Activated T-helper 1 cell treated with anti-CD3 and anti-CD28 coated beads, Interleukin-12 subunit alpha, Interleukin-12 subunit beta, Interleukin-2, Interleukin-4 antibody, amounts not matched to agents 30 ng/mL and 10 ng/mL and 1 ng/mL, durations not matched to agents 14 hours and 24 hours and 36 hours (primary cell): ENCODE measurements at regions of chr17 and their contacts with region 1.

Region 1: DNA sequence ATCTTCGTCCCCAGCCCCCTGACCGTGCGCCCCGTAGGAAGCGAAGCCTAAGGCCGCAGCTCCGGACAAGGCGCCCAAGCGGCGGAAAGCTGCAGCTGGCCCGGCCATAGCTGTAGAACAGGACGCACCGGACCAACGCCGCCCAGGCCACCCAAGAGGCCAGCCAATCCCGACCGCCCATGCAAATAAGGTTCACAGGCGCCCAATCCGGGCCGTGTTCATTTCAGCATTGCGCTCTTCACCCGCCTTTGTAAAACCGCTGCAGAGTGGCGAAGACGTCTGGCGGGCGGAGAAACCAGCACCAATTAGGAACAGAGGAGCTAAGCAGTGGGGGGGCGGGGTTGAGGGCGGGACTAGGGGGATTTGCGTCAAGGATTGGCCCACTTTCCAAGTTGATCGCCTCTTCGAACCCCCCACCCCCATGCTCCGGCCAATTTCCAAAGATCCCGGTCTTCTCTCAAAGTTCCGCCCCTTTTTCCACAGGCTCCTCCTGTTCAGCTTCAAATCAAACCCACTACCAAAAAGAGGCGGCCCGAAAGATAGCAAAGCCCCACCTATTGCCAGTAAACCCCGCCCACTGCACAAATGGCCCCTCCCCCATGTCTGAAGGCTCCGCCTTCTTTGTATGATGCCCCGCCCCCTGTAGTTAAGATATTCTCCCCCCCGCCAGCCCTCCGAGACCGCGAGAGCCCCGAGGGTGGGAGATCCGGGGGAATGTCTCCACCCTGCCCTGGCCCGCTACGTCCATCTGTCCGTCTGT is at the start of gene TMEM256:
- DNase-seq: peak; percentile 94
- H3K4me3 Mint-ChIP-seq: peak within 1 kb of the TSS; percentile 92
- H3K27ac Mint-ChIP-seq: peak within 1 kb of the TSS; percentile 95
- H3K4me1 Mint-ChIP-seq: peaks cover 13% of the 10 kb centered on the region
- H3K27me3 Mint-ChIP-seq: peaks cover 21% of the 10 kb centered on the region
- total RNA-seq, gene TMEM256: 53.5 and 54.7 TPM in 2 replicates

Region 2: GRCh38 chr17:7214300-7215135 is 189.6 kb before region 1 on chr17:
- intact Hi-C with region 1: loop called (anchors 1 kb)
- DNase-seq: peak; percentile 99
- H3K4me3 Mint-ChIP-seq: peak overlapping the region; percentile 91
- H3K27ac Mint-ChIP-seq: peak overlapping the region; percentile 98
- H3K4me1 Mint-ChIP-seq: peaks cover 55% of the 10 kb centered on the region
- H3K27me3 Mint-ChIP-seq: peaks cover 14% of the 10 kb centered on the region

Region 3: DNA sequence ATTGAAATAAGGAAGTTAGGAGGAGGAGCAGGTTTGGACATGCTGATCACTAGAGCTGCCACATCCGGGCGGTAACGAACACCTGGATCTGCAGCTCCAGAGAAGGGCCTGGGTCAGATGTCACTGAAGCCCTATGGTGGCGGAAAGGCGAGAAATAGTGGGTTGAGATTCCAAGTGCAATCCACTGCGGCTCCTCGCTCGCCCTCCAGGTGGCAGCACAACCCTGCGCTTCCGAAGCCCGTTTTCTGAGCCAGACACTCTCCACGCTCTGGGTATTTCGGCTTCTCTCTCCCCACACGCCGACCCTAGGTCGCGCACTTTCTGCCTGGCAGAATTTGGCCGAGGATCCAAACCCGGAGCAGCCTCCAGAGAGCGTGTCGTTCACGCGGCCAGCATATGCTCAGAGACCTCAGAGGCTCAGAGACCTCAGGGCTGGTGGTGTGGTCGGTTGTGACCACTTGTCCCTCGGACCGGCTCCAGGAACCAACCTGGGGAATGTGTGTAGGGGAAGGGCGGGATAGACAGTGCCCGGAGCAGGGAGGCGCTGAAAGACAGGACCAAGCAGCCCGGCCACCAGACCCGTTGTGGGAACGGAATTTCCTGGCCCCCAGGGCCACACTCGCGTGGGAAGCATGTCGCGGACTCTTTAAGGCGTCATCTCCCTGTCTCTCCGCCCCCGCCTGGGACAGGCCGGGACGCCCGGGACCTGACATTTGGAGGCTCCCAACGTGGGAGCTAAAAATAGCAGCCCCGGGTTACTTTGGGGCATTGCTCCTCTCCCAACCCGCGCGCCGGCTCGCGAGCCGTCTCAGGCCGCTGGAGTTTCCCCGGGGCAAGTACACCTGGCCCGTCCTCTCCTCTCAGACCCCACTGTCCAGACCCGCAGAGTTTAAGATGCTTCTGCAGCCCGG is 123.4 kb before region 1 on chr17:
- intact Hi-C with region 1: loop called (anchors 1 kb)
- DNase-seq: peak; percentile 69
- H3K4me3 Mint-ChIP-seq: peak overlapping the region; percentile 79
- H3K27ac Mint-ChIP-seq: peak overlapping the region; percentile 40
- H3K4me1 Mint-ChIP-seq: peaks cover 16% of the 10 kb centered on the region
- H3K27me3 Mint-ChIP-seq: peaks cover 33% of the 10 kb centered on the region

Region 4: GRCh38 chr17:7351665-7352501 is 52.3 kb before region 1 on chr17 and contains the start of gene KCTD11:
- intact Hi-C with region 1: loop called (anchors 1 kb)
- DNase-seq: peak; percentile 76
- H3K4me3 Mint-ChIP-seq: peak within 1 kb of the TSS; percentile 84
- H3K27ac Mint-ChIP-seq: peak within 1 kb of the TSS; percentile 87
- H3K4me1 Mint-ChIP-seq: peaks cover 41% of the 10 kb centered on the region
- H3K27me3 Mint-ChIP-seq: no peaks in the 10 kb centered on the region
- total RNA-seq, gene KCTD11: 5.3 TPM in 2 replicates

Region 5: DNA sequence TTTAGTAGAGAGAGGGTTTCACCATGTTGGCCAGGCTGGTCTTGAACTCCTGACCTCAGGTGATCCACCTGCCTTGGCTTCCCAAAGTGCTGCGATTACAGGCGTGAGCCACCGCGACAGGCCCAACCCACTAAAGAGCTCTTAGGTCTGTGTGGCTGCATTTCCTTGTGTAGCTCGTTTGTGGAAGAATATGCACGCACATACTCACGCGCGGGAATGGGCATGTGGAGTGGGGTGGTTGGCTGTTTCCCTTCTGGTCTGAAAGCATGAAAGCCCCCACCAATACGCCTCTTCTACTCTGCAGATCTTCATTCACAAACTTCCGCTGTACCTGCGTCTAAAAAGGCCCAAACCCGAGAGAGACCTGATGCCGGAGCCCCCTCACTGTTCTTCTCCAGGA is 50.8 kb after region 1 on chr17:
- intact Hi-C with region 1: loop called (anchors 1 kb)
- DNase-seq: no peak
- H3K4me3 Mint-ChIP-seq: peak overlapping the region; percentile 87
- H3K27ac Mint-ChIP-seq: peak overlapping the region; percentile 88
- H3K4me1 Mint-ChIP-seq: peaks cover 31% of the 10 kb centered on the region
- H3K27me3 Mint-ChIP-seq: no peaks in the 10 kb centered on the region

Region 6: GRCh38 chr17:7614422-7615264 is 210.5 kb after region 1 on chr17 and contains the start of gene FXR2:
- intact Hi-C with region 1: loop called (anchors 1 kb)
- DNase-seq: peak; percentile 99
- H3K4me3 Mint-ChIP-seq: peak within 1 kb of the TSS; percentile 85
- H3K27ac Mint-ChIP-seq: peak within 1 kb of the TSS; percentile 89
- H3K4me1 Mint-ChIP-seq: peaks cover 39% of the 10 kb centered on the region
- H3K27me3 Mint-ChIP-seq: no peaks in the 10 kb centered on the region
- total RNA-seq, gene FXR2: 59.5 and 63.6 TPM in 2 replicates